ENCODE measurements at regions of chr17 and their contacts with region 1.

Region 1: GRCh38 chr17:45385331-45385997 is 47.2 kb downstream of the ARHGAP27 start:
- DNase-seq: peak; percentile 72 to 96 (median 88)
- ATAC-seq: peak; percentile 95
- H3K4me3 ChIP-seq: no peak overlapping the region
- H3K4me3 Mint-ChIP-seq: no peak overlapping the region
- H3K27ac ChIP-seq: no peak overlapping the region
- H3K27ac Mint-ChIP-seq: no peak overlapping the region
- H3K4me1 ChIP-seq: peaks cover 10% of the 10 kb centered on the region
- H3K4me1 Mint-ChIP-seq: peaks cover 14% of the 10 kb centered on the region
- H3K27me3 ChIP-seq: peaks cover 0 to 3% of the 10 kb centered on the region in 2 experiments
- H3K27me3 Mint-ChIP-seq: peaks cover 11% of the 10 kb centered on the region
- CTCF ChIP-seq: peak; percentile 98

Region 2: GRCh38 chr17:45228763-45229539 is 156.5 kb before region 1 on chr17:
- CTCF ChIA-PET with region 1: interaction called, 15 read pairs
- POLR2A ChIA-PET with region 1: interaction called, 3 read pairs
- intact Hi-C with region 1: no loop called
- DNase-seq: peak; percentile 60 to 95 (median 83)
- ATAC-seq: peak; percentile 50
- H3K4me3 ChIP-seq: peak overlapping the region; percentile 84 to 97
- H3K4me3 Mint-ChIP-seq: peak overlapping the region; percentile 100
- H3K27ac ChIP-seq: peak overlapping the region; percentile 97
- H3K27ac Mint-ChIP-seq: peak overlapping the region; percentile 100
- H3K4me1 ChIP-seq: peaks cover 93% of the 10 kb centered on the region
- H3K4me1 Mint-ChIP-seq: peaks cover 82% of the 10 kb centered on the region
- H3K27me3 ChIP-seq: no peaks in the 10 kb centered on the region
- H3K27me3 Mint-ChIP-seq: no peaks in the 10 kb centered on the region
- CTCF ChIP-seq: no peak

Region 3: DNA sequence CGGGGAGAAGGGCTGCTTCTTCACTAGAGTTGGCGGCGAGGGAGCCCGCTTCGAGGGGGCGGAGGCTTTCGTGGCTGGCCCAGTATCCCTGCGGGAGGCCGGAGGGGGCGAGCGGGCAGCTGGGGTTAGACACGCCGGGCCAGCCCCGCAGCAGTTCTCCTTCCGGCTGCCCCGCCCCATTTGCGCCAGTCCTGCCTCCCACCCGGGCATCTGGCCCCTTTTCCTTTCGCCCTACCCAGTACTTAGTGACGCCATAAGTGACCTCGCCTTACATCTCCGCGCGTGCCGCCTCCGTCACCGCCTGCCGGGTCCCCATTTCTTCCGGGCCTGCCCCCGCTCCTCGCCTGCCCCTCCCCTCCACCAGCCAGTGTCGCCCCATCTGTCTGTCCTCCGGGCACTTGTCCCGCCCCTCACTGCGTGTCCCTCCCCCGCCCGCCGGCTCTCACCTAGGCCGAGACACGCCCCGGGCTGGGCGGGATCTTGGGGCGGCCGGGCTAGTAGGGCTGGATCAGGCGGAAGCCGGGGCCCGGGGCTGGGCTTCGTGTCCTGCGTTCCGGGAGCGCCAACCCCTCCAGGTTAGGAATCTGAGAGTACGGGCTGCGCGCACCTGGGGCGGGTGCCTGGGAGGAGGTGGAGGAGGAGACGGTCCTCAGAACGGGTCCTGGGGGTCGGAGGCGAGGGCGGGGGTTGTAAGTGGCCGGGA is 137.9 kb before region 1 on chr17:
- CTCF ChIA-PET with region 1: interaction called, 8 read pairs
- POLR2A ChIA-PET with region 1: interaction called, 3 read pairs
- intact Hi-C with region 1: loop called in 1 of 2 experiments (anchors 1 kb)
- DNase-seq: peak; percentile 95 to 99 (median 98)
- ATAC-seq: peak; percentile 81
- H3K4me3 ChIP-seq: peak overlapping the region; percentile 58 to 94
- H3K4me3 Mint-ChIP-seq: peak overlapping the region; percentile 87
- H3K27ac ChIP-seq: peak overlapping the region; percentile 88 to 89
- H3K27ac Mint-ChIP-seq: peak overlapping the region; percentile 97
- H3K4me1 ChIP-seq: peaks cover 67% of the 10 kb centered on the region
- H3K4me1 Mint-ChIP-seq: peaks cover 61% of the 10 kb centered on the region
- H3K27me3 ChIP-seq: no peaks in the 10 kb centered on the region
- H3K27me3 Mint-ChIP-seq: no peaks in the 10 kb centered on the region
- CTCF ChIP-seq: no peak

Region 4: DNA sequence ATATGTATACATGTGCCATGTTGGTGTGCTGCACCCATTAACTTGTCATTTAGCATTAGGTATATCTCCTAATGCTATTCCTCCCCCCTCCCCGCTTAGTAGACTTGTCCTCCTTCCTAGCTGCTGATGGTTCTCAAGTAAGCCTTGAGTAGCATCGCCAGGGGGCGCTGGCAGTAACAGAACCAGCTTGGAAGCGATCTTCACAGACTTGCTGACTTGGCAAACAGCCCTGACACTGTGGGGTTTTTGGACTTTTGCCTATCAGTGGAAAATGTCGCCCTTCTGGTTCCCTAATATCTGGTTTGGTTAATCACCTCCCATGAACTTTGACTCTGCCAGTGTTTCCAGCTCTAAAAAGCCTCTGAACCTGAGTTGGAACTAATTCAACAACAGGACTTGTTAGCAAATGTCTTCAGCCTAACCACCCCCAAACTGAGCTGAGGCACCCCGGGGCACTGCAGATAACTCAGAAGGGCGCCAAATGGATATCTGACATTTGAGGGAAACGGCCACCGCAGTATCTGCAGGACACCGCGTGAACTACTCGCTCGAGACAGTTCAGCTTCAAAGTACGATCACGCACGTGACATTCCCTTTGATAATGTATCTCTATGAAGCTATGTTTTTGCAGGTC is 108.1 kb before region 1 on chr17:
- CTCF ChIA-PET with region 1: interaction called, 279 read pairs
- POLR2A ChIA-PET with region 1: interaction called, 11 read pairs
- intact Hi-C with region 1: loop called (anchors 1 kb)
- DNase-seq: peak; percentile 78 to 93 (median 91)
- ATAC-seq: peak; percentile 99
- H3K4me3 ChIP-seq: no peak overlapping the region
- H3K4me3 Mint-ChIP-seq: no peak overlapping the region
- H3K27ac ChIP-seq: no peak overlapping the region
- H3K27ac Mint-ChIP-seq: peak overlapping the region; percentile 41
- H3K4me1 ChIP-seq: no peaks in the 10 kb centered on the region
- H3K4me1 Mint-ChIP-seq: peaks cover 7% of the 10 kb centered on the region
- H3K27me3 ChIP-seq: no peaks in the 10 kb centered on the region
- H3K27me3 Mint-ChIP-seq: no peaks in the 10 kb centered on the region
- CTCF ChIP-seq: peak; percentile 73

Region 5: DNA sequence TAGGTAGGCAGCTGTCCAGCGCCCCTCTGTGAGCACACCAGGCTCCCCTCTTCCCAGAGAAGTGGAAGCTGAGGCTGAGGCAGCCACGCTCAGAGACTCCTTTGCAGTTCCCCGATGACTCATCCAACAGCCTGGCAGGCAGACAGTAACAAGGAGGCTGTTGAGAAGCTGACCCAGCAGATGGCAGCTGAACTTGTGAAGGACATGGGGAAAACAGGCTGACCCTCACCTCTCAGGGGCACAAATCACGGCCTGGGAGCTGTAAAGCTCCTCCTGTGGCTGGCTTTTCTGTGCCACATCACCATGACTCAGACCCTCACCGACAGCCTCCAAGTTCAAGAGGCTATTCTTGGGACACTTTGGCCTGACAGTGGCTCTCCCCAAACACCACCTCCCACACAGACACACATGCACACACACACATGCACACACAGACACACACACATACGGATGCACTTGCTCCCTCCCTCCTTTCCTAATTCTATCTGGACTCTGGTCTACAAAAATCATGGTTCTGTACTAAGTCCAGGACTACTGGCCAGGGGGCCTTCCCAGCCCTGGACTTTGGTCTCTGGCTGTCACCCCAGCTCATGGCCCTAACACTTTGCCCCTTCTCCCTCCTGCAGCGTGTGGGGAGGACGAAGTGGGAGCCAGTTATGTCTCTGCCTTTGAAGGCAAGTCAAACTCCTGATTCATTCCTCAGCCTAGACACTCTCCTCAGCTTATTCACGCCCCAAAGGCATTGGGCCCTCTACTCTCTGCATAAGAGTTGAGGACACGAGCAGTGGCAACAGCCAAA is 91.9 kb before region 1 on chr17:
- CTCF ChIA-PET with region 1: interaction called, 20 read pairs
- POLR2A ChIA-PET with region 1: no interaction called
- intact Hi-C with region 1: no loop called
- DNase-seq: peak in 1 of 9 experiments; percentile 34
- ATAC-seq: no peak
- H3K4me3 ChIP-seq: no peak overlapping the region
- H3K4me3 Mint-ChIP-seq: no peak overlapping the region
- H3K27ac ChIP-seq: no peak overlapping the region
- H3K27ac Mint-ChIP-seq: peak overlapping the region; percentile 58
- H3K4me1 ChIP-seq: peaks cover 26% of the 10 kb centered on the region
- H3K4me1 Mint-ChIP-seq: peaks cover 71% of the 10 kb centered on the region
- H3K27me3 ChIP-seq: no peaks in the 10 kb centered on the region
- H3K27me3 Mint-ChIP-seq: no peaks in the 10 kb centered on the region
- CTCF ChIP-seq: no peak

Region 6: GRCh38 chr17:45317112-45317928 is 68.1 kb before region 1 on chr17:
- CTCF ChIA-PET with region 1: interaction called, 46 read pairs
- POLR2A ChIA-PET with region 1: interaction called, 4 read pairs
- intact Hi-C with region 1: loop called in 1 of 2 experiments (anchors 2 kb)
- DNase-seq: peak; percentile 99 to 100 (median 100)
- ATAC-seq: peak; percentile 81
- H3K4me3 ChIP-seq: peak overlapping the region; percentile 55 to 81
- H3K4me3 Mint-ChIP-seq: peak overlapping the region; percentile 95
- H3K27ac ChIP-seq: peak overlapping the region; percentile 75 to 81
- H3K27ac Mint-ChIP-seq: peak overlapping the region; percentile 94
- H3K4me1 ChIP-seq: peaks cover 78% of the 10 kb centered on the region
- H3K4me1 Mint-ChIP-seq: peaks cover 80% of the 10 kb centered on the region
- H3K27me3 ChIP-seq: no peaks in the 10 kb centered on the region
- H3K27me3 Mint-ChIP-seq: no peaks in the 10 kb centered on the region
- CTCF ChIP-seq: no peak

Region 7: GRCh38 chr17:45410144-45411091 is 25.0 kb after region 1 on chr17:
- CTCF ChIA-PET with region 1: interaction called, 10 read pairs
- POLR2A ChIA-PET with region 1: no interaction called
- intact Hi-C with region 1: no loop called
- DNase-seq: peak in 8 of 9 experiments; percentile 52 to 81 (median 64)
- ATAC-seq: peak; percentile 86
- H3K4me3 ChIP-seq: peak overlapping the region; percentile 100
- H3K4me3 Mint-ChIP-seq: peak overlapping the region; percentile 99
- H3K27ac ChIP-seq: peak overlapping the region; percentile 85 to 94
- H3K27ac Mint-ChIP-seq: peak overlapping the region; percentile 99
- H3K4me1 ChIP-seq: peaks cover 42% of the 10 kb centered on the region
- H3K4me1 Mint-ChIP-seq: peaks cover 48% of the 10 kb centered on the region
- H3K27me3 ChIP-seq: no peaks in the 10 kb centered on the region
- H3K27me3 Mint-ChIP-seq: no peaks in the 10 kb centered on the region
- CTCF ChIP-seq: no peak

Region 8: DNA sequence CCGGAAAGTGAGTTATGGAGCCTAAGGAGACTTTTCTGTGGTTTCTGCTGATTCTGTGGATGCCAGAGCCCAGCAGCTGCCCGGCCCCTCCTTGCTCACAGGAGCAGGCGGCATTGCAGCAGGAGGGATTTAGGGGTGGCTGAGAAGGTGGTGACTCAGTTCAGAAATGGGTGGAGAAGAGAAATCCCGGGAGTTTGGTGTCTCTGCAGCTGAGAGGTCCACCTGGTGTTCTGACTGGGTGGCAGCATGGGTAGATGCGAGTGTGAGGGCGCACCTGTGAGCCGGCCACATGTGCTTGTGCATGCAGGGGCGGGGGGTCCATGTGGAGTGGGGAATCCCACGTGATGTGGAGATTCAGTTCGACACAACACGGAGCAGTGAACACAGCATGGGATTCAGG is 443.2 kb after region 1 on chr17:
- CTCF ChIA-PET with region 1: no interaction called
- POLR2A ChIA-PET with region 1: no interaction called
- intact Hi-C with region 1: no loop called
- DNase-seq: no peak
- ATAC-seq: no peak
- H3K4me3 ChIP-seq: no peak overlapping the region
- H3K4me3 Mint-ChIP-seq: no peak overlapping the region
- H3K27ac ChIP-seq: no peak overlapping the region
- H3K27ac Mint-ChIP-seq: no peak overlapping the region
- H3K4me1 ChIP-seq: no peaks in the 10 kb centered on the region
- H3K4me1 Mint-ChIP-seq: peaks cover 2% of the 10 kb centered on the region
- H3K27me3 ChIP-seq: no peaks in the 10 kb centered on the region
- H3K27me3 Mint-ChIP-seq: no peaks in the 10 kb centered on the region
- CTCF ChIP-seq: no peak